Activated naive CD4-positive, alpha-beta T cell treated with anti-CD3 and anti-CD28 coated beads for 36 hours (primary cell): ENCODE measurements at regions of chrX and their contacts with region 1.

Region 1: GRCh38 chrX:134396174-134396573 is 63.8 kb upstream of the HPRT1 start:
- DNase-seq: no peak
- H3K4me3 Mint-ChIP-seq: no peak overlapping the region
- H3K27ac Mint-ChIP-seq: no peak overlapping the region
- H3K4me1 Mint-ChIP-seq: peaks cover 9% of the 10 kb centered on the region
- H3K27me3 Mint-ChIP-seq: no peaks in the 10 kb centered on the region

Region 2: GRCh38 chrX:134355996-134356395 is 40.2 kb before region 1 on chrX:
- CTCF ChIA-PET with region 1: no interaction called
- intact Hi-C with region 1: no loop called
- DNase-seq: no peak
- H3K4me3 Mint-ChIP-seq: no peak overlapping the region
- H3K27ac Mint-ChIP-seq: no peak overlapping the region
- H3K4me1 Mint-ChIP-seq: no peaks in the 10 kb centered on the region
- H3K27me3 Mint-ChIP-seq: no peaks in the 10 kb centered on the region

Region 3: DNA sequence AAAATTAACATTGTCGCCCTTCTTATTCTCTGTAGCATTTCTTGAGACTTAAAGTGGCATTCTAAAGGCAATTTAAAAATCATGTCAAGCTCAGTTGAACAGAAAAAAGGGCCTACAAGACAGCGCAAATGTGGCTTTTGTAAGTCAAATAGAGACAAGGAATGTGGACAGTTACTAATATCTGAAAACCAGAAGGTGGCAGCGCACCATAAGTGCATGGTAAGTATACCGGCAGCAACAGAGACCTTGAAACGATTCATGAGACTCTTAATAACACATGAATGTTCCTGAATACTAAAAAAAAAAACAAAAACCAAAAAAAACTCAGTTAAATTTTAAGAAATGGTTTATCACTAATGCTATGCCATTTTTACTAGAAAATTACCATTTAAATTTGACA is 18.6 kb before region 1 on chrX:
- CTCF ChIA-PET with region 1: interaction called, 4 read pairs
- intact Hi-C with region 1: loop called (anchors 1 kb)
- DNase-seq: peak; percentile 34
- H3K4me3 Mint-ChIP-seq: no peak overlapping the region
- H3K27ac Mint-ChIP-seq: no peak overlapping the region
- H3K4me1 Mint-ChIP-seq: peaks cover 8% of the 10 kb centered on the region
- H3K27me3 Mint-ChIP-seq: no peaks in the 10 kb centered on the region

Region 4: DNA sequence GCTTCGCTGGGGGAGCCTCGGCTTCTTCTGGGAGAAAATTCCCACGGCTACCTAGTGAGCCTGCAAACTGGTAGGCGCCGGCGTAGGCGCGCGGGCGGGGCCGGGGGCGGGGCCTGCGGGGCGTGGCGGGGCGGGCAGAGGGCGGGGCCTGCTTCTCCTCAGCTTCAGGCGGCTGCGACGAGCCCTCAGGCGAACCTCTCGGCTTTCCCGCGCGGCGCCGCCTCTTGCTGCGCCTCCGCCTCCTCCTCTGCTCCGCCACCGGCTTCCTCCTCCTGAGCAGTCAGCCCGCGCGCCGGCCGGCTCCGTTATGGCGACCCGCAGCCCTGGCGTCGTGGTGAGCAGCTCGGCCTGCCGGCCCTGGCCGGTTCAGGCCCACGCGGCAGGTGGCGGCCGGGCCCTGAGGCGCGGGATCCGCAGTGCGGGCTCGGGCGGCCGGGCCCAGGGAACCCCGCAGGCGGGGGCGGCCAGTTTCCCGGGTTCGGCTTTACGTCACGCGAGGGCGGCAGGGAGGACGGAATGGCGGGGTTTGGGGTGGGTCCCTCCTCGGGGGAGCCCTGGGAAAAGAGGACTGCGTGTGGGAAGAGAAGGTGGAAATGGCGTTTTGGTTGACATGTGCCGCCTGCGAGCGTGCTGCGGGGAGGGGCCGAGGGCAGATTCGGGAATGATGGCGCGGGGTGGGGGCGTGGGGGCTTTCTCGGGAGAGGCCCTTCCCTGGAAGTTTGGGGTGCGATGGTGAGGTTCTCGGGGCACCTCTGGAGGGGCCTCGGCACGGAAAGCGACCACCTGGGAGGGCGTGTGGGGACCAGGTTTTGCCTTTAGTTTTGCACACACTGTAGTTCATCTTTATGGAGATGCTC is 64.1 kb after region 1 on chrX and contains the start of gene HPRT1:
- CTCF ChIA-PET with region 1: no interaction called
- intact Hi-C with region 1: no loop called
- DNase-seq: peak; percentile 80
- H3K4me3 Mint-ChIP-seq: peak within 1 kb of the TSS; percentile 85
- H3K27ac Mint-ChIP-seq: peak within 1 kb of the TSS; percentile 85
- H3K4me1 Mint-ChIP-seq: peaks cover 7% of the 10 kb centered on the region
- H3K27me3 Mint-ChIP-seq: no peaks in the 10 kb centered on the region
- total RNA-seq, gene HPRT1: 111 TPM

Region 5: GRCh38 chrX:134558133-134558532 is 162.0 kb after region 1 on chrX:
- CTCF ChIA-PET with region 1: no interaction called
- intact Hi-C with region 1: no loop called
- DNase-seq: no peak
- H3K4me3 Mint-ChIP-seq: no peak overlapping the region
- H3K27ac Mint-ChIP-seq: no peak overlapping the region
- H3K4me1 Mint-ChIP-seq: no peaks in the 10 kb centered on the region
- H3K27me3 Mint-ChIP-seq: peaks cover 22% of the 10 kb centered on the region